Left colon (tissue), 2 donors: ENCODE measurements at regions of chr9 and their contacts with region 1.

Region 1: GRCh38 chr9:119712325-119712724 is 343.1 kb upstream of the BRINP1 start:
- DNase-seq: no peak
- ATAC-seq: no peak

Region 2: DNA sequence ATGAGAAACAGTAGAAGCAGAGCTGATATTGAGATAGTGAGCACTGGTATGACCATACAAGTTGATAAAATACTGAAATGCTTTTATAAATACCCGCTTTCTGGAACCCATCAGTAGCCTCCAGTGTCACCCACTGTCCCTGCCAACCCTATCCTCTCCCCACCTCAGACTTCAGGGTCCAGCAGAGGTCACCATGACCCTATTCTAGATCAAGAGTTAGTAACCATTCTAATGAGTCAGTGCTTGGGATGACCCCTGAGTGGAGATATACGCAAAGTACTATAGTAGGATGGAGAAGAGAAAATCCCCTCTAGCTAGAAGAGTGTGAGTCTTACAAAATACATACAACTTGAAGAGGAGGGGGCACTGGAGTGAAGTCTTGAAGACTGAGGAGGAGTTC is 45.2 kb before region 1 on chr9:
- intact Hi-C with region 1: no loop called
- DNase-seq: no peak
- ATAC-seq: no peak

Region 3: GRCh38 chr9:120366646-120367019 is 654.3 kb after region 1 on chr9:
- intact Hi-C with region 1: loop called in 1 of 2 experiments (anchors 10 kb)
- DNase-seq: no peak
- ATAC-seq: no peak